Mammary epithelial cell (primary cell): ENCODE measurements at regions of chr2 and their contacts with region 1.

Region 1: DNA sequence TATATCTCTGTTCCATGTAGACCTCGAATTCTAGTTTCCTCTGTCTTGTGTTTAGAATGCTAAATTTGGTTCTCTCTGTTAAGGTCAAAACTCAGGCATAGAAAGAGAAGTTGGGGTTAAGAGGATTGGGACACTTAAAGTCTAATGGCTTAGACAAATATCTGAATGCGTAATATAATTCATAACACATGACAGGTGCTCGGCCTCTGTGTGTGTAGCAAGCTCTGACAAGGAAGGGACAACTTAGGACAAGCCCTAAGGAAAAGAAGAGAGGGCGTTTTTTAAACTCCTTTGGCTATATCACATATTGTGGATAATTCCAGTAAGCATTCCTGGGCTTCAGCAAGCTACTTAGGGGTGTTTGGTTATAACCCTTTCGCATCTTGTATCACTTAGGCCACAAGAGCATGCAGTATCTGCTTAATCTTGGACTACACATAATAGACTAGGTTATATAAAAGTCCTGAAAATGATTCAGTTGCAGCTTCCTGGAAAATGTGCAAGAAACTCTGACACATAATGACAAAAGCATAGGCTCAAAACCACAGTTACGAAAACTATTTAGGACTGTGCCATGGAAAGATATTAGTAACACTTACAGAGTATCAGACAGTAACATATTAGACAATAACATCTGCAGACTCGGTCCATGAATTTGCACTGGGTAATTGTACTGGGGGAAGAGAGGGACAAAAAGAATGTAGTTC is 16.1 kb upstream of the CREB1 start:
- DNase-seq: peak; percentile 96
- H3K4me3 ChIP-seq: no peak overlapping the region
- H3K27ac ChIP-seq: peak overlapping the region; percentile 94
- H3K4me1 ChIP-seq: peaks cover 46% of the 10 kb centered on the region
- H3K27me3 ChIP-seq: no peaks in the 10 kb centered on the region
- CTCF ChIP-seq: no peak

Region 2: DNA sequence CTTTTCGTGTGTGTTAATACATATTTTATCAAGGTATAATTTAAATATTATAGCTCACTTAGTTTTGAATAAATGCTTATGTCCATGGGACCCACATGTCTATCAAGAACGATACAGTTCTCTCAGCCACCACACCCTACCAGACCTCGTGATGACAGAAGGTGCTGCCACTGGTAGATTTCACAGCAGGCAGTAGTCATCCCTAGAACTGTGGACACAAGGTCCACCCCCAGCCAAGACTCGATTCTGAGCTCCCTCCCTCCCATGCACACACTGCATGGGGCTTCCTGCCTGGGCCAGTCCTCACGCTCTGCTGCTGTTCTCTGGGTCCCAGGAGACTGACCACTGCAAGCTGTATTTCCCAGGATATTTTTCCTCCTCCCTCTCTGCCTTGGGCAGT is 10.5 kb before region 1 on chr2:
- CTCF ChIA-PET with region 1: no interaction called
- dilution Hi-C with region 1: no loop called
- in situ Hi-C with region 1: no loop called
- intact Hi-C with region 1: loop called (anchors 1 kb)
- DNase-seq: no peak
- H3K4me3 ChIP-seq: no peak overlapping the region
- H3K27ac ChIP-seq: no peak overlapping the region
- H3K4me1 ChIP-seq: peaks cover 37% of the 10 kb centered on the region
- H3K27me3 ChIP-seq: no peaks in the 10 kb centered on the region
- CTCF ChIP-seq: no peak